Activated CD4-positive, alpha-beta T cell treated with anti-CD3 and anti-CD28 coated beads, Interleukin-2, amount 10 ng/mL, durations not matched to agents 24 days and 14 days (primary cell): ENCODE measurements at regions of chr12 and their contacts with region 1.

Region 1: DNA sequence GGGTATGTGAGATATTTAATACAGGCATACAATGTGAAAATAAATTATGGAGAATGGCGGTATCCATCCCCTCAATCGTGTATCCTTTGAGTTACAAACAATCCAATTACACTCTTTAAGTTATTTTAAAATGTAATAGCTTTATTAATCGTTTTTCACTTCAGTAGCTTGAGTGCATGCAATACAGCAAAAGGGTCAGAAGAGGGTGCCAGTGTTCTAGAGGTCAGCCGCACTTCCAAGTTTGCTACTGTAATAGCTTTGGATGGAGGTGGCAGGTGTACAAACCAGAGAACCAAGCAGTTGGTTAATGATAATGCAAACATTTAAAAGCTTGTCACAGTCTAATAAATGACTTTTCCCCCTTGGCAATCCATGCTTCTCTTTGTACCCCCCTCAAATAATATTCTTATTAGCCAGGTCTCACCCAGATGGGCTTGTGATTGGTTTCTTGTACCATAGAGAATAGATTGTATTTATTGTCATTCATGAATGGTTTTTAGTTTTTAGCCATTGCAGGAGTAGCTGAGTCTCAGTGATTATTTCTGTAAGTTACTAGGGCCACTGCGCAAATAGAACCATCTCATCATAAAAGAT is 127.0 kb downstream of the ERC1 start:
- DNase-seq: peak; percentile 90
- H3K4me3 Mint-ChIP-seq: no peak overlapping the region
- H3K27ac Mint-ChIP-seq: no peak overlapping the region
- H3K4me1 Mint-ChIP-seq: peaks cover 10% of the 10 kb centered on the region
- H3K27me3 Mint-ChIP-seq: no peaks in the 10 kb centered on the region

Region 2: GRCh38 chr12:1083889-1084262 is 34.2 kb before region 1 on chr12:
- intact Hi-C with region 1: no loop called
- DNase-seq: peak; percentile 5
- H3K4me3 Mint-ChIP-seq: no peak overlapping the region
- H3K27ac Mint-ChIP-seq: no peak overlapping the region
- H3K4me1 Mint-ChIP-seq: peaks cover 4% of the 10 kb centered on the region
- H3K27me3 Mint-ChIP-seq: no peaks in the 10 kb centered on the region

Region 3: GRCh38 chr12:1217191-1217949 is 99.3 kb after region 1 on chr12:
- intact Hi-C with region 1: loop called (anchors 10 kb)
- DNase-seq: no peak
- H3K4me3 Mint-ChIP-seq: no peak overlapping the region
- H3K27ac Mint-ChIP-seq: no peak overlapping the region
- H3K4me1 Mint-ChIP-seq: peaks cover 4% of the 10 kb centered on the region
- H3K27me3 Mint-ChIP-seq: no peaks in the 10 kb centered on the region

Region 4: GRCh38 chr12:1533602-1534304 is 415.7 kb after region 1 on chr12:
- intact Hi-C with region 1: loop called (anchors 5 kb)
- DNase-seq: peak; percentile 87
- H3K4me3 Mint-ChIP-seq: peak overlapping the region; percentile 80
- H3K27ac Mint-ChIP-seq: peak overlapping the region; percentile 32
- H3K4me1 Mint-ChIP-seq: peaks cover 25% of the 10 kb centered on the region
- H3K27me3 Mint-ChIP-seq: peaks cover 64% of the 10 kb centered on the region

Region 5: GRCh38 chr12:1583421-1584078 is 465.5 kb after region 1 on chr12:
- intact Hi-C with region 1: loop called (anchors 1 kb)
- DNase-seq: peak; percentile 91
- H3K4me3 Mint-ChIP-seq: no peak overlapping the region
- H3K27ac Mint-ChIP-seq: no peak overlapping the region
- H3K4me1 Mint-ChIP-seq: peaks cover 14% of the 10 kb centered on the region
- H3K27me3 Mint-ChIP-seq: no peaks in the 10 kb centered on the region

Region 6: GRCh38 chr12:1605129-1606020 is 487.3 kb after region 1 on chr12:
- intact Hi-C with region 1: loop called (anchors 5 kb)
- DNase-seq: peak; percentile 90
- H3K4me3 Mint-ChIP-seq: peak overlapping the region; percentile 86
- H3K27ac Mint-ChIP-seq: peak overlapping the region; percentile 64
- H3K4me1 Mint-ChIP-seq: peaks cover 41% of the 10 kb centered on the region
- H3K27me3 Mint-ChIP-seq: peaks cover 10% of the 10 kb centered on the region